Transverse colon (tissue), 4 donors: ENCODE measurements at regions of chr1 and their contacts with region 1.

Region 1: GRCh38 chr1:167819849-167820683 is 93.9 kb downstream of the ADCY10 start:
- DNase-seq: peak; percentile 65
- H3K4me3 ChIP-seq: peak overlapping the region in 3 of 4 donors; percentile 15 to 39 (median 19)
- H3K27ac ChIP-seq: peak overlapping the region; percentile 68 to 71 (median 70)
- H3K4me1 ChIP-seq: peaks cover 0 to 15% (median 5%) of the 10 kb centered on the region in 4 donors
- H3K27me3 ChIP-seq: no peaks in the 10 kb centered on the region
- CTCF ChIP-seq: no peak
- EP300 ChIP-seq: no peak
- POLR2A ChIP-seq: no peak

Region 2: DNA sequence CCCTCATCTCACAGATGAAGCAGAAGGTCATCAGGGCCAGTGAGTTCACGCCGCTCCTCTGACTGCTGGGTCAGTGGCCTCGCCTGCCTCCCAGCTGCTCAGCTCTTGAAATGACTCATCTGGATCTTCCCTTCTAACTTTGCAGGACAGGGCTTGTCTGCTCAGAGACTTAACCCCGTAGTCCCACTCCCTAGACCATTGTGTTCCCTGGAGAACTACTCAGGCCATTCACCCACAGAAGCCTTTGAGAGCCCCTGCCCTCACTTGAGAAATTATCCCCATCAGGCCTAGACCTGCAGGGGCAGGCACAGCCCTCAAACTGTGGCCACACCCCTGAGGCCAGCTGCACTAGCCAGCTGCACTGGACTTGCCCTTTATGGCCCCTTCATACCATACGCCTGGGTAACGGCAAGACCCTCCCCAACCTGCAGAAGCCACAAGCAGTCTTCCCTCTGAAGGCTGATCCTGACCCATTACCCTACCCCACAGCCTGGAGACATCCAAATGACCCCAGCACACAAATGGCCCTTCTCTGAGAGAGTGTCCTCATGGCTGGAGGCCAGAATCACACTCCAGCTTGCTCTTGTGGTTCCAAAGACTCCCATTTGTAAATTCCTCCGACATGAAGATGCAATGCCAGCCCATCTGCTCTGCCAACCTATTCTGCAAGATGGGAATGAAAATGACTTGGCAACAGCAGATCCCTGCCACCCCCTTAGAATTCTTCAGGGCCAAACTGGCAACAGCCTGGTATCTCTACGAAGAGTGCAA is 156.9 kb before region 1 on chr1:
- in situ Hi-C with region 1: no loop called
- intact Hi-C with region 1: no loop called
- DNase-seq: no peak
- H3K4me3 ChIP-seq: no peak overlapping the region
- H3K27ac ChIP-seq: peak overlapping the region; percentile 57 to 63 (median 61)
- H3K4me1 ChIP-seq: peaks cover 4 to 56% (median 19%) of the 10 kb centered on the region in 4 donors
- H3K27me3 ChIP-seq: no peaks in the 10 kb centered on the region
- CTCF ChIP-seq: no peak
- EP300 ChIP-seq: no peak
- POLR2A ChIP-seq: no peak

Region 3: DNA sequence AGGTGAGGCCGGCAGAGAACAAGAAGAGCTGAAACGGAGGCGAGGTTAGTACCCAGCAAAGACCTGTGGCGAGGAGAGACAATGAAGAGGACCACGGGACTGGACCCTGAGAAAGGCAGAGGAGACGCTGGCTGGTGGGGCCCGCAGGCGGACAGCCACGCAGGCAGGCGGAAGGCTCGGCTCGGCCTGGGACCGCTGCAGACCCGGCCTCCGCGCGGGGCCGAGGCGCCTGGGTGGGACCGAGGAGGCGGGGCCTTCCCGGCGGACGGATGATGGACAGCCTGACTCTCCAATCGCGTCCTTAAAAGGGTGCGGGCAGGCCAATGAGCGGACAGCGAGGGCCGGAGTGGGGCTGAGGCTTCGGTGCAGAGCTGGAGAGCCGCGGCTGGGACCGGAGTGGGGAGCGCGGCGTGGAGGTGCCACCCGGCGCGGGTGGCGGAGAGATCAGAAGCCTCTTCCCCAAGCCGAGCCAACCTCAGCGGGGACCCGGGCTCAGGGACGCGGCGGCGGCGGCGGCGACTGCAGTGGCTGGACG is 98.4 kb before region 1 on chr1 and contains the start of gene MPZL1:
- in situ Hi-C with region 1: loop called in 1 of 4 experiments (anchors 10 kb)
- intact Hi-C with region 1: no loop called
- DNase-seq: peak; percentile 98
- H3K4me3 ChIP-seq: peak within 1 kb of the TSS; percentile 88 to 100 (median 98)
- H3K27ac ChIP-seq: peak within 1 kb of the TSS; percentile 92 to 98 (median 94)
- H3K4me1 ChIP-seq: peaks cover 13 to 53% (median 33%) of the 10 kb centered on the region in 4 donors
- H3K27me3 ChIP-seq: no peaks in the 10 kb centered on the region
- CTCF ChIP-seq: no peak
- EP300 ChIP-seq: no peak
- POLR2A ChIP-seq: peak; percentile 77
- total RNA-seq, gene MPZL1: 32.9 to 79.5 (median 58.2) TPM

Region 4: GRCh38 chr1:167790117-167790516 is 29.9 kb before region 1 on chr1:
- in situ Hi-C with region 1: no loop called
- intact Hi-C with region 1: no loop called
- DNase-seq: no peak
- H3K4me3 ChIP-seq: no peak overlapping the region
- H3K27ac ChIP-seq: no peak overlapping the region
- H3K4me1 ChIP-seq: peaks cover 0 to 3% (median under 1%) of the 10 kb centered on the region in 4 donors
- H3K27me3 ChIP-seq: no peaks in the 10 kb centered on the region
- CTCF ChIP-seq: no peak
- EP300 ChIP-seq: no peak
- POLR2A ChIP-seq: no peak